Posterior vena cava (tissue), 2 donors: ENCODE measurements at regions of chrX and their contacts with region 1.

Region 1: GRCh38 chrX:17679820-17680219 is 57.5 kb upstream of the SCML1 start:
- DNase-seq: no peak

Region 2: DNA sequence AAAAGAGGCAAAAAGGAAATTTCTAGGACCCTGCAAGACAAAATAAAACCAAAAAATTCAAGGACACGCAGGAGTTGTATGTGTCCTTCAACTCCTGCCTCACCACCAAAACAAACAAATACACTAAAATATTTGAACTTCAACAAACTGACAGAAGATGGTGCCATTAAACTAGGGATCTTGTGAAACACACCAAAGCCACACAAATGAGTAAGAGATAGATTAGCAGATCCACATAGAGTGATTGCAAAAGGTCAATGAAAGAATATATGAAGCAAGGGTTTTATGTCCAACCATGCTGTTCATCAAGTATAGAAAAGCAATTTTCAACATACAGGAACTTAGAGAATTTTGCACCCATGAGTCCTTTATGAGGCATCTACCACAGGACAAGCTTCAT is 17.4 kb after region 1 on chrX:
- intact Hi-C with region 1: loop called in 1 of 2 experiments (anchors 2 kb)
- DNase-seq: no peak